Activated T-helper 2 cell treated with anti-CD3 and anti-CD28 coated beads, Interferon-gamma antibody, Interleukin-2, Interleukin-4, amounts not matched to agents 10 μg/mL and 5 μg/mL and 100 μg/mL, durations not matched to agents 14 hours and 24 hours and 36 hours (primary cell): ENCODE measurements at regions of chr9 and their contacts with region 1.

Region 1: DNA sequence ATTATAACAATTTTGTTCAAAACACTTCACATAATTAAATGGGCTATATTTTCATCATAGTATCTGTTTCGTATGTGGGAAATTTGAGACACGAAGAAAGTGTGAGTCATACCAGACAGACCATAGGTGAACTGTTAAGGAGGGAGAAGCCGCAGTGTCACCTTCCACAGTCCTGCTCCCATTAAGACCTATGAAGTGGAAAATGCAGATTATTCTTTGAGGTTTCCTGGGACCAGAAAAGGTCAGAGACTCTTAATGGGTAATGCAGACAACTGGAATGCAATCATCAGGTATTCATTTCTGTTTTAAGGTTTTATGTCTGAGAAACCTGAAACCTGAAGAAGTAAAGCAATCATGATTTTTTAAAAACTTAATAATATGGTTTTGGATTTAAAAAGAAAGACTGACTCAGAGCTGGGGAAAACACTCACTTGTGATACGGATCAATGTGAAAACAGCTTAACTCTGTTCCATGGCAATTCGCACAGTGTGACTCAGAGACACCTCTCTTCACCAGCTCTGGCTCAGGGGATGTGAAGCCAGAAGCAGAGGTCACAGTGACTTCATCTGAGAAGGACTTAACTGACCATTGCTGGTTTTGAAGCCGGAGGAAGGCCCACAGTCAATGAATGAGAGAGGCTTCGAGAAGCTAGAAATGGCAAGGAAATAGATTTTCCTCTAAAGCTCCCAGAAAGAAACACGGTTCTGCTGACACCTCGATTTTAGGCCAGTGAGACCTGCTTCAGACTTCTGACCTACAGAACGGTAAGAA is 17.2 kb upstream of the GCNT1 start:
- DNase-seq: peak; percentile 19
- H3K4me3 Mint-ChIP-seq: peak overlapping the region; percentile 88
- H3K27ac Mint-ChIP-seq: peak overlapping the region; percentile 99
- H3K4me1 Mint-ChIP-seq: peaks cover 65% of the 10 kb centered on the region
- H3K27me3 Mint-ChIP-seq: no peaks in the 10 kb centered on the region

Region 2: GRCh38 chr9:76403352-76403751 is 38.4 kb before region 1 on chr9:
- intact Hi-C with region 1: loop called (anchors 1 kb)
- DNase-seq: peak; percentile 15
- H3K4me3 Mint-ChIP-seq: peak overlapping the region; percentile 58
- H3K27ac Mint-ChIP-seq: peak overlapping the region; percentile 76
- H3K4me1 Mint-ChIP-seq: peaks cover 22% of the 10 kb centered on the region
- H3K27me3 Mint-ChIP-seq: no peaks in the 10 kb centered on the region

Region 3: DNA sequence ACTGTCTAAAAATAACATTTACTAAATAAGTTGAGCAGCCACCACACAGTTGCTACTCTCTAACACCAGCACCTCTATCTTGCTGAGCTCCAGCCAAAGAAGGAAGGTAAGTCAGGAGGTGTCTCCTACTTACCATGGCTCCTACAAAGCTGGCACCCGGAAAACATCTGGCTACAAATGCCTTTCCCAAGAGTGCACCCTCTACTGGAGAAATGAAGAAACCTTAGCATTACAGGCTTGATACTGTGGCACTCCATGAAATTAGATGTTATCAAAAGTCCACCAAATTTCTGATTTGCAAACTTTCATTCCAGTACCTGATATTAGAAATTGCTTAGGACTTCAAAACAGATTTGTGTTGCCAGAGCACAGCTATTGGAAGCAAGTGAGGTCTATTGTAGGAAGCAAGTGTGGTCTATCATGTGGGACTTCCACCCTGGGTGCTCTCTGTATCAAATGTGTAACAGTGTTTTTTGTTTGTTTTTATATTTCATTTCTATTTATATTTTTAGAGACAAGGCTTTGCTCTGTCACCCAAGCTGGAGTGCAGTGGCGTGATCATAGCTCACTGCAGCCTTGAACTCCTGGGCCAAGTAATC is 21.9 kb before region 1 on chr9:
- intact Hi-C with region 1: loop called (anchors 1 kb)
- DNase-seq: no peak
- H3K4me3 Mint-ChIP-seq: no peak overlapping the region
- H3K27ac Mint-ChIP-seq: no peak overlapping the region
- H3K4me1 Mint-ChIP-seq: peaks cover 40% of the 10 kb centered on the region
- H3K27me3 Mint-ChIP-seq: no peaks in the 10 kb centered on the region

Region 4: DNA sequence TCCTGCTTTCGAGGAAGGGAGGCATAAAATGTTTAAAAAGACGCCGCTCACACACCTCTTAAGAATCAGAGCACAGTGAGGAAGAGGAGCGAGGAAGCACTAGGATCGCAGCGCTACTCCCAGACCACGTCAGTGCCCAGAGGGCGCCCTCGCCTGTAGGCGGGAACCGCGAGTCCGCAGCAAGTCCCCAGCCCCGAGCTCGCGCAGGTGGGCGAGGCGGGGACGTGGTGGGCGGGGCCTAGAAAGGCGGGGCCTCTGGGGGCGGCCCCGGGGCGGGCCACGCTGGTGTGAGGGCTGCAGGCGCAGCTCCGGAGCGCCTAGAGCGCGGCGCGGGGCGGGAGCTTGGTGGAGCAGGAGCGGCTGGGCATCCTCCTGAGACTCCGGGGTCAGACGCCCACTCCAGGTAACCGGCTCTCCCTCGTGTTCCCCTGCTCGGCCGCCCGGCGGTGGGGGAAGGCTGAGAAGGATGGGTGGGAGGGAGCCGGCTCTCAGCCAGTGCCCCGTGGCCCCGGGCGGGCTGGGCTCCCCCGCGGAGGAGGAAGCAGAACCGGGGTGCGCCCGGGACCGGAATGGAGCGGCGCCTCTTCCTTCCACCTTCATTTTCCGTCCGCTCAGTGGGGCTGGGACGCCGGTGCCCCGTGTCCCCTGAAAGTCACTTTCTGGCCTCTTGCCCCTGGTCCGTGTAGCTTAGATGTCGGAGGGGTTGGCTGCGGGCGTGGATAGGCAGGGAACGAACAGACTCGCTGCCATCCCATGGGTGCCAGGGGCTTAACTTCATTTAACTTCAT is 17.4 kb after region 1 on chr9 and contains the start of gene GCNT1:
- intact Hi-C with region 1: loop called (anchors 2 kb)
- DNase-seq: peak; percentile 91
- H3K4me3 Mint-ChIP-seq: peak within 1 kb of the TSS; percentile 95
- H3K27ac Mint-ChIP-seq: peak within 1 kb of the TSS; percentile 76
- H3K4me1 Mint-ChIP-seq: peaks cover 33% of the 10 kb centered on the region
- H3K27me3 Mint-ChIP-seq: no peaks in the 10 kb centered on the region
- total RNA-seq, gene GCNT1: 12.1 and 15.0 TPM in 2 replicates

Region 5: DNA sequence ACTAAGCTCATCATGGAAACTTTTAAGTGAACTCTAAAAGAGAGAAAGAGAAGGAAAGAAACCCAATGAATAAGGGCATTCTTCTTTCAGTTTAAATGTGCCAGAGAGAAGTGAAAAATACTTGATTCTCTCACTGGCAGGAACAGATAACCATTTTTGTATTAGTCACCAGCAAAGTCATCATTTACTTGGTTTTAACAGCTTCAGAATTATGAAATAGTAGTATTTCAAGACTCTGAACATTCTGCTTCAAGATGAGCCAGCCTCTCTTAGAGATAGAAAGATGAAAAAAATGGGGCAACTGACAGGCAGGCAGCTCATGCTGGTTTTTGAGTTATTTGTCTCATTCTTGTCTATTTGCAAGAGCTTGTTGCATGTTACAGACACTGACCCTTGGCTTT is 120.8 kb after region 1 on chr9:
- intact Hi-C with region 1: loop called (anchors 1 kb)
- DNase-seq: no peak
- H3K4me3 Mint-ChIP-seq: no peak overlapping the region
- H3K27ac Mint-ChIP-seq: peak overlapping the region; percentile 43
- H3K4me1 Mint-ChIP-seq: peaks cover 23% of the 10 kb centered on the region
- H3K27me3 Mint-ChIP-seq: peaks cover 4% of the 10 kb centered on the region

Region 6: GRCh38 chr9:76576344-76576743 is 134.6 kb after region 1 on chr9:
- intact Hi-C with region 1: loop called (anchors 1 kb)
- DNase-seq: peak; percentile 57
- H3K4me3 Mint-ChIP-seq: no peak overlapping the region
- H3K27ac Mint-ChIP-seq: peak overlapping the region; percentile 73
- H3K4me1 Mint-ChIP-seq: peaks cover 29% of the 10 kb centered on the region
- H3K27me3 Mint-ChIP-seq: peaks cover 5% of the 10 kb centered on the region

Region 7: GRCh38 chr9:76687861-76688391 is 246.2 kb after region 1 on chr9:
- intact Hi-C with region 1: loop called (anchors 1 kb)
- DNase-seq: no peak
- H3K4me3 Mint-ChIP-seq: no peak overlapping the region
- H3K27ac Mint-ChIP-seq: peak overlapping the region; percentile 23
- H3K4me1 Mint-ChIP-seq: peaks cover 28% of the 10 kb centered on the region
- H3K27me3 Mint-ChIP-seq: peaks cover 31% of the 10 kb centered on the region